H1 (cell line): ENCODE measurements at regions of chr3 and their contacts with region 1.

Region 1: GRCh38 chr3:15051531-15051930 is 13.6 kb downstream of the MRPS25 start:
- DNase-seq: peak; percentile 36 to 81
- H3K4me3 ChIP-seq: no peak overlapping the region
- H3K27ac ChIP-seq: no peak overlapping the region
- H3K4me1 ChIP-seq: peaks cover 0 to 2% (median 0%) of the 10 kb centered on the region in 4 experiments; a peak in 2 of 7 replicates
- H3K27me3 ChIP-seq: no peaks in the 10 kb centered on the region
- CTCF ChIP-seq: peak; percentile 80 to 96 (median 81)
- EP300 ChIP-seq: no peak
- POLR2A ChIP-seq: peak in 1 of 2 experiments; percentile 57; a peak in 2 of 3 replicates
- RAD21 ChIP-seq: peak; percentile 49 to 63

Region 2: DNA sequence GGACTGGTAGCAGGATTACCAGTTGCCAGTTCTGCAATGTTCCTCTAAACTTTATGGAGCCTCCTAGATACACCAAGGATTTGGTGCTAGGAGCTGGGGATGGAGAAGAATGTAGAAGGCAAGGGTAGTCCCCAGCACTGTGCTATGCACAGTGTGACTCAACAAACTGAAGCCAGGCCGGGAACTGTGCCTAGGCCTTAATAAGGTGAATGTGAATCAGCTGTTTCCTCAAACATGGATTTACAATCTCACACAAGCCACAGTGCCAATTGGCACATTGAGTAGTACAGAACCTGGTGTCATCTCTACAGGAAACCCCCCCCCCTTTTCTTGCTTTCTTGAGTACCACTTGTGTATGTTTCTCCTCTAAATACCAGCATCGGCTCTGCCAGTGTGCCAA is 18.9 kb before region 1 on chr3:
- CTCF ChIA-PET with region 1: interaction called, 3 read pairs
- POLR2A ChIA-PET with region 1: interaction called, 11 read pairs
- DNase-seq: no peak
- H3K4me3 ChIP-seq: no peak overlapping the region
- H3K27ac ChIP-seq: no peak overlapping the region
- H3K4me1 ChIP-seq: no peaks in the 10 kb centered on the region
- H3K27me3 ChIP-seq: no peaks in the 10 kb centered on the region
- CTCF ChIP-seq: no peak
- EP300 ChIP-seq: no peak
- POLR2A ChIP-seq: no peak
- RAD21 ChIP-seq: no peak

Region 3: DNA sequence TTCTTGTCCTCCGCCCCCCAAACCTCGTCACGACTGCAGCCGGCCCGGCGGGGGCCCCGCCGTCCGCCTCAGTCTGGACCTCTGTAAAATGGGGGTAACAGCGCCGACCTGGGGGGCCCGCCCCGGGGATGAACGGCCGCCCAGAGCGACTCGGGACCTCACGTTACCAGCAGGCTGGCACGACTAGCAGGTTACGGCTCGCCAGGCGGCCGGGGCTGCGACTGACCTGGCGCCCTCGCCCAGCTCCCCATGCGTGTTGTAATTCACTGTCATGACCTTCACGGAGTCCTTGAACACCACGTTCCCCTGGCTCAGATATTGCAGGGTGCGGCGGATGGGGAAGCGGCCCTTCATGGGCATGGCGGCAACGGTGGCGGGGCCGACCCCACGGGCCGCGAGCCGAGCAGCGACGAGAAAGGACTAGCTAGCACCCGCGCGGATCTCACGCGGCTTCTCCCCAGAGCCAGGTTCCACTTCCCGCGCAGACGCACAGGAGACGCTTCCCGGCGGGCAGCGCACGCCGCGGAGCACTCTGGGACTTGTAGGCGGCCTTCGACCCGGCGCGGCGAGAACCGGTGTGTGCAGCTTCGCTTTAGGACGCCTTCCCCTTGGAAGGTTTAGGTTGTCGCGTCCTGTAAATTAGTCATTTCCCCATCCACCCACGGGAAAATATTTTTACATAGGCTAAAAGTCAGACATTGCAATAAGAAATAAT is 13.5 kb after region 1 on chr3 and contains the start of gene MRPS25:
- CTCF ChIA-PET with region 1: interaction called, 11 read pairs
- POLR2A ChIA-PET with region 1: interaction called, 17 read pairs
- DNase-seq: peak; percentile 53 to 86
- H3K4me3 ChIP-seq: peak within 1 kb of the TSS; percentile 81 to 97 (median 89)
- H3K27ac ChIP-seq: peak within 1 kb of the TSS; percentile 67; the same call in 1 of the 2 replicates
- H3K4me1 ChIP-seq: peaks cover 0 to 11% (median 6%) of the 10 kb centered on the region in 4 experiments; a peak in 5 of 7 replicates
- H3K27me3 ChIP-seq: no peaks in the 10 kb centered on the region
- CTCF ChIP-seq: no peak
- EP300 ChIP-seq: no peak
- POLR2A ChIP-seq: peak; percentile 87 to 94
- RAD21 ChIP-seq: no peak
- total RNA-seq, gene MRPS25: 56.5 TPM in 2 replicates

Region 4: GRCh38 chr3:15089201-15089600 is 37.7 kb after region 1 on chr3:
- CTCF ChIA-PET with region 1: no interaction called
- POLR2A ChIA-PET with region 1: no interaction called
- DNase-seq: no peak
- H3K4me3 ChIP-seq: no peak overlapping the region
- H3K27ac ChIP-seq: no peak overlapping the region
- H3K4me1 ChIP-seq: no peaks in the 10 kb centered on the region
- H3K27me3 ChIP-seq: no peaks in the 10 kb centered on the region
- CTCF ChIP-seq: no peak
- EP300 ChIP-seq: no peak
- POLR2A ChIP-seq: no peak
- RAD21 ChIP-seq: no peak